Right lobe of liver (tissue), 6 donors: ENCODE measurements at regions of chr13 and their contacts with region 1.

Region 1: DNA sequence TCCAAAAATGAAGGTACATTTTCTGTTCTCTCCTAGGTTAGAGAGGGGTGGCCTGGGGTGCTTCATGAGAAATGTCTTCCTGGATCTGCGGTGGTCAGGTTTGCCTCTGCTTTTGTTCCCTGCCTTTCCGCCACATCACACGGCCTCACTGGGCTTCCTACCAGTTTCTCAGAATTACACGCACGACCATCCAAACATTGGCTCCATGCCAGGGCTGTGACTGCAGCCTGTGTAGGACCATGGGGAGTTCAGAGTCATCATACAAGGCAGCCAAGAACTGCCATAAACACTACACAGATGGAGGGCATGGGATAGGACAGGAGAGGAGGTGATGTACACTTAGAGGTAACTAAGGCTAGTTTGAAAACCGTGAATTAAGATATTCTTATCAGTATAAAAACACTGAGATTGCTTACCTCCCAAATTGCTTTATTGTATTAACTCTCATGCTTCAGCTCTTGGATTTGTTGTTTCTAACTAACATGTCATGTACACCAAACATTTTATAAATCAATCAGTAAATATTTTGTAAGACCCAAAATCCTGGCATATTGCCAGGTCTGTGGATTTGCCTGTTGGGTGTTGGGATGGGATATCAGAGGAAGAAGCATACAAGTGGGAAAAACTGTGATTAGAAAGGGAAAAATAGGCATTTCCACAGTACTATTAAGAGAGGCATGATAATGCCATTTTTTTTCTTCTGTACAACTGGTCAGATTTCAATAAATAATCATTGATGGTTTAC is 45.2 kb downstream of the CDADC1 start:
- DNase-seq: peak; percentile 61 to 69 (median 65)
- ATAC-seq: peak; percentile 64 to 78 (median 66)
- H3K4me3 ChIP-seq: no peak overlapping the region
- H3K27ac ChIP-seq: peak overlapping the region in 1 of 3 donors; percentile 35
- H3K4me1 ChIP-seq: peaks cover 0 to 19% (median 2%) of the 10 kb centered on the region in 4 donors
- H3K27me3 ChIP-seq: no peaks in the 10 kb centered on the region
- CTCF ChIP-seq: no peak
- POLR2A ChIP-seq: no peak

Region 2: DNA sequence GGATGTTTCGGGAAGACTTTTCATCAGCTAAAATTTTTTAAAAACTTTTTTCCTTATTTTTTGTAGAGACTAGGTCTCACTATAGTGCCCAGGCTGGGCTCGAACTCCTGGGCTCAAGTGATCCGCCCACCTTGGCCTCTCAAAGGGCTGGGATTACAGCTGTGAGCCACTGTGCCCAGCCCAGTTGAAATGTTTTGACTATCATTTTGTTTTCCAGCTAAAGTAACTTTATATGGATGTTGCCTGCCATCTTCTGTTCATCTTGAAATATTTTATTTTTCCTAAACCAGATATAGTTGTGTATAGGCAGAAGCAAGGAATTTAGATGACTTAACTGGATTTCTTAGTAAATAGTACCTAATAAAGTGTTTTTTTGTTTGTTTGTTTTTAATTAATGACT is 144.0 kb after region 1 on chr13:
- intact Hi-C with region 1: loop called (anchors 10 kb)
- DNase-seq: no peak
- ATAC-seq: peak; percentile 46 to 81 (median 58)
- H3K4me3 ChIP-seq: no peak overlapping the region
- H3K27ac ChIP-seq: no peak overlapping the region
- H3K4me1 ChIP-seq: no peaks in the 10 kb centered on the region
- H3K27me3 ChIP-seq: no peaks in the 10 kb centered on the region
- CTCF ChIP-seq: peak in 3 of 4 donors; percentile 12 to 25 (median 21)
- POLR2A ChIP-seq: no peak

Region 3: DNA sequence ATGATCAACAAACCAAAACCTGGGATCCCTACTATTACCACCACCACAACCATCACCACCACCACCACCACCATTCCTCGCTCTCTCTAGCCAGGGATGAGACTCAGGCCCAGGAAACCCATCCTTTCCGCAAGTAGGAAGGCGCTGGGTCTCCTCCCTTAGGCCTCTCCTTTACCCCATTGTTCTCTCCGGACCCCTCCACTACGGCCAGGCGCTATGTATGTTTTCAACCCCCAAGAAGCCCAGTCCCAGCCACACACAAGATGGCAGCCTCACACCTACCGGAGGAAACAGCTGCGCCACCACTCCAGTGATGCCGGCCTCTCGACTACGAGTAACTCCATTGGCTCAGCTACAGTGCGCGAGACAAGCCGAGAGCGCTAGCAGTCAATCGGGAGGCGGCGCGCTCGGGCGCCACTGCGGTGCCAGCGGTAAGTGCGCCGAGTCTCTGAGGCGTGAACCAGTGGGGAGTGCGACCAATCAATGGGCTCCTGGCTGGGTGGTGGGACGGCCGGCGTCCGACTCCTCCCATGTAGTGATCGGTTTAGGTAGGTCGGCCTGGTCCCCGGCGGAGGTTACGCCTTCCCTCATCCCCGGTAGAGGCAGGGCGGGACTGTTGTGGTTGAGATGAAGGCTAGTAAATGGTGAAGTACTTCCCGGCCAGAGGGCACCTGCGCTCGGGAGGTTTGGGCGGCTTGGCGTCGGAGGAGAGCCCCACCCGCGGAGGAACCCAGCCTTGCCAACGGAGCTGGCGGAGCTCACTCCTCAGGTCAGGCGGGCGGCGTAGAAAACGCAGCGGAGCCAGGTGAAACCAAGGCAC is 151.0 kb after region 1 on chr13 and contains the starts of genes CAB39L and SETDB2:
- intact Hi-C with region 1: loop called (anchors 10 kb)
- DNase-seq: peak; percentile 99 to 100 (median 100)
- ATAC-seq: peak; percentile 93 to 99 (median 96)
- H3K4me3 ChIP-seq: peak within 1 kb of the TSS; percentile 73 to 85 (median 74)
- H3K27ac ChIP-seq: peak within 1 kb of the TSS; percentile 84 to 92 (median 91)
- H3K4me1 ChIP-seq: peaks cover 0 to 11% (median 0%) of the 10 kb centered on the region in 4 donors
- H3K27me3 ChIP-seq: no peaks in the 10 kb centered on the region
- CTCF ChIP-seq: peak; percentile 45 to 62 (median 55)
- POLR2A ChIP-seq: peak; percentile 94
- total RNA-seq, gene CAB39L: 1.9 to 4.1 (median 2.8) TPM
- total RNA-seq, gene SETDB2: 3.7 to 6.7 (median 4.6) TPM

Region 4: DNA sequence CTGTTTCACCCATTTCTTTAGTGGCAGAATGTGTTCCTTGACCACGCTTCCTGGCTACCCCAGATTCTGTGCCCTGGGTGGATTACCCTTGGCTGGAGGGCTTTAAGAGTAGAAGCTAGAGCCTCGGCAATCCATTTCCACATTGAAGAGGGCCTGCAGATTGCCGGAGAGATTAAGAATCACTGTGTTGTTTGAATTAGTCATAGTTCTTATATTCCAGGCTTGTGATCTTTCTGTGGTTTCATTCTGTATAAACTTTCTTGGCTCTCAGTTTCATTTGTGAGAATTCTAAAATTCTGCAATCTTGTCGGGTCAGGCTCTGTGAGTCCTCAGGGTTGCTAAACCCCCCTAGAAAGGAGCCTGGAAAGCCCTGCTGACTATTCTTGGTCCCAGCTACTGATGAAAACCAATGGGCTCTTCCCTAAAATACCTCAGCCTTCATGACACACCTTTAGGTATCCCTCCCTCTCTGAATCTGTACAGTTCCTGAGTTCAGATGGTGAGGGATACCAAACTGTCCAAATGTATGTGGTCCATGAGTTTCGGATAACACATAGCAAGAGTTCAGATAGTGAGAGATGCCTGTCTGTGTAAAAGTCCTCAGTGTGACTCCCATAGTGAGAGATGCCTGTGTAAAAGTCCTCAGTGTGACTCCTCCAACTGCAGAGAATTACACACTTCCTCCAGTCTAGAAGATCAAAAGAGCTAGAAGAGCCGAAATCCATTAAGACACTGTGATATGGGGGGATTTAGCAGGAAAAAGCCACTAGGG is 207.2 kb after region 1 on chr13:
- intact Hi-C with region 1: no loop called
- DNase-seq: no peak
- ATAC-seq: no peak
- H3K4me3 ChIP-seq: no peak overlapping the region
- H3K27ac ChIP-seq: no peak overlapping the region
- H3K4me1 ChIP-seq: no peaks in the 10 kb centered on the region
- H3K27me3 ChIP-seq: no peaks in the 10 kb centered on the region
- CTCF ChIP-seq: no peak
- POLR2A ChIP-seq: no peak

Region 5: DNA sequence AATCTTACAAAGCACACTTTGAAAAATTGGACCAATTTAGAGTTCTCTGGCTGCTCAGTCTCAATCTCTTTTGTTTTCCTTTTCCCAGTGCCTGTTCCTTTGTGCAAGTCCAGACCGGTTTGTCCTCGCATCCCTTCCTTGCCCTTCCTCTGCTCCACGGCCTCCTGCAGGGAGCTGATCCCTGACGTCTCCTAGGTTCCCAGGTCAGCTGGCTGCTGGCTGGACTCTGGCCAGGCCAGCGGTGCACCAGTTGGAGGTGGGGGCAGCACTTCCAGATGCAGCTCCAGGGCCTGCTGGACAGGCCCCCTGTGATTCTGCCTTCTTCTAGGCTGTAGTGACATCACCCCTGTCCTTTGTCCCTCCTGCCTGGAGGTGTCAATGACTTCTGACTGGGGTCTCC is 543.6 kb after region 1 on chr13:
- intact Hi-C with region 1: no loop called
- DNase-seq: no peak
- ATAC-seq: no peak
- H3K4me3 ChIP-seq: no peak overlapping the region
- H3K27ac ChIP-seq: no peak overlapping the region
- H3K4me1 ChIP-seq: no peaks in the 10 kb centered on the region
- H3K27me3 ChIP-seq: no peaks in the 10 kb centered on the region
- CTCF ChIP-seq: no peak
- POLR2A ChIP-seq: no peak